MCF 10A (cell line): ENCODE measurements at regions of chr1 and their contacts with region 1.

Region 1: GRCh38 chr1:171313835-171314320 is at the start of gene FMO4:
- DNase-seq: peak; percentile 100
- H3K4me3 Mint-ChIP-seq: peak within 1 kb of the TSS; percentile 64
- H3K27ac Mint-ChIP-seq: peak within 1 kb of the TSS; percentile 79
- H3K4me1 Mint-ChIP-seq: peaks cover 6% of the 10 kb centered on the region
- H3K27me3 Mint-ChIP-seq: no peaks in the 10 kb centered on the region
- CTCF ChIP-seq: peak; percentile 85
- total RNA-seq, gene FMO4: 0.63 and 1.5 TPM in 2 replicates

Region 2: DNA sequence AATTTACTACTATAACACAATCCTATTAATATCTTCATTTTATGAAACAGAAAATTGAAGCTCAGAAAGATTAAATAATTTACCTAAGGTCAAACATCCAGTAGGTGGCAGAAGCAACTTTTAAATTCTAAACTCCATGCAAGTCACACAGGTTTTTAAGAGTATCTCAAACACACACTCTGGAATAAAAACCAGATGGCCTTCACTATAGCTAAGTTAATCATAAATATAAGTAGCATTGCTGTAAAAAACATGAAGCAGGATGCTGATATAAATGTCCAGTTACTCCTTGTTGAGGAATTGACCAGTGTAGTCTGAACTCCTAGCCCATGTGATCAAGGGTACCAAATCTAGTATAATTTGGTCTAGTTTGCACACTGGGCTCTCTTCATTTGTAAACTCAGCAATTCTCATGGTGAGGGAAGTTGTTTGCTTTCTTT is 232.5 kb before region 1 on chr1:
- CTCF ChIA-PET with region 1: interaction called, 38 read pairs
- POLR2A ChIA-PET with region 1: interaction called, 7 read pairs
- intact Hi-C with region 1: loop called (anchors 1 kb)
- DNase-seq: peak; percentile 52
- H3K4me3 Mint-ChIP-seq: no peak overlapping the region
- H3K27ac Mint-ChIP-seq: no peak overlapping the region
- H3K4me1 Mint-ChIP-seq: no peaks in the 10 kb centered on the region
- H3K27me3 Mint-ChIP-seq: no peaks in the 10 kb centered on the region
- CTCF ChIP-seq: peak; percentile 34

Region 3: DNA sequence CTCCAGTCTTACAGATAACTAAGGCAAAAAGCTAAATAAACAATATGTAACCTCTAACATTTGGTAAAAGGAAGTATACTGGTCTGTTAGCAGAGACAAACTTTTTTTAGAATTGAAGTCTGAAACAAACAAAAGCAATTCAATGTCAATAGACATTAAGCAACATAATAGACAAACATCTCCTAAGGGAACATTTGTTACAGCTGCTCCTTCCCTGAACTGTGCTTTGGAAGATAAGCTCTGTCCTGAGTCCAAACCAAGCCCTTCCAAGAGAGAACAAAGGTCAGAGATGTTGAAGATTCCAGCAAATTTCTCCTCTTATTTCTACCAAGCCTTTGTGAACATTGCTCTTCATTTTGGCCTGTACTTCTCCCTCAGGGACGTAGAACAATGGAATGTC is 103.5 kb before region 1 on chr1:
- CTCF ChIA-PET with region 1: interaction called, 14 read pairs
- POLR2A ChIA-PET with region 1: no interaction called
- intact Hi-C with region 1: no loop called
- DNase-seq: no peak
- H3K4me3 Mint-ChIP-seq: no peak overlapping the region
- H3K27ac Mint-ChIP-seq: no peak overlapping the region
- H3K4me1 Mint-ChIP-seq: no peaks in the 10 kb centered on the region
- H3K27me3 Mint-ChIP-seq: no peaks in the 10 kb centered on the region
- CTCF ChIP-seq: no peak

Region 4: GRCh38 chr1:171245458-171246064 is 68.3 kb before region 1 on chr1:
- CTCF ChIA-PET with region 1: interaction called, 651 read pairs
- POLR2A ChIA-PET with region 1: interaction called, 41 read pairs
- intact Hi-C with region 1: loop called (anchors 1 kb)
- DNase-seq: peak; percentile 77
- H3K4me3 Mint-ChIP-seq: no peak overlapping the region
- H3K27ac Mint-ChIP-seq: no peak overlapping the region
- H3K4me1 Mint-ChIP-seq: no peaks in the 10 kb centered on the region
- H3K27me3 Mint-ChIP-seq: peaks cover 15% of the 10 kb centered on the region
- CTCF ChIP-seq: peak; percentile 78

Region 5: GRCh38 chr1:171292799-171293198 is 21.1 kb before region 1 on chr1:
- CTCF ChIA-PET with region 1: interaction called, 43 read pairs
- POLR2A ChIA-PET with region 1: interaction called, 3 read pairs
- intact Hi-C with region 1: no loop called
- DNase-seq: no peak
- H3K4me3 Mint-ChIP-seq: no peak overlapping the region
- H3K27ac Mint-ChIP-seq: no peak overlapping the region
- H3K4me1 Mint-ChIP-seq: no peaks in the 10 kb centered on the region
- H3K27me3 Mint-ChIP-seq: no peaks in the 10 kb centered on the region
- CTCF ChIP-seq: no peak

Region 6: GRCh38 chr1:171434717-171435346 is 121.0 kb after region 1 on chr1:
- CTCF ChIA-PET with region 1: interaction called, 7 read pairs
- POLR2A ChIA-PET with region 1: interaction called, 3 read pairs
- intact Hi-C with region 1: loop called (anchors 10 kb)
- DNase-seq: peak; percentile 96
- H3K4me3 Mint-ChIP-seq: peak overlapping the region; percentile 58
- H3K27ac Mint-ChIP-seq: peak overlapping the region; percentile 78
- H3K4me1 Mint-ChIP-seq: peaks cover 31% of the 10 kb centered on the region
- H3K27me3 Mint-ChIP-seq: no peaks in the 10 kb centered on the region
- CTCF ChIP-seq: no peak